ENCODE measurements at regions of chr2 and their contacts with region 1.

Region 1: GRCh38 chr2:127067620-127068350 is 39.2 kb downstream of the BIN1 start:
- DNase-seq: peak; percentile 87
- H3K4me3 ChIP-seq: no peak overlapping the region; a peak in 1 of 4 replicates
- H3K27ac ChIP-seq: no peak overlapping the region
- H3K4me1 ChIP-seq: peaks cover 15 to 29% of the 10 kb centered on the region in 2 experiments; a peak in 3 of 4 replicates
- H3K27me3 ChIP-seq: no peaks in the 10 kb centered on the region
- CTCF ChIP-seq: peak; percentile 82
- EP300 ChIP-seq: no peak
- RAD21 ChIP-seq: peak; percentile 82

Region 2: GRCh38 chr2:126866451-126866850 is 201.3 kb before region 1 on chr2:
- CTCF ChIA-PET with region 1: no interaction called
- POLR2A ChIA-PET with region 1: no interaction called
- DNase-seq: no peak
- H3K4me3 ChIP-seq: no peak overlapping the region
- H3K27ac ChIP-seq: no peak overlapping the region
- H3K4me1 ChIP-seq: no peaks in the 10 kb centered on the region
- H3K27me3 ChIP-seq: no peaks in the 10 kb centered on the region
- CTCF ChIP-seq: no peak
- EP300 ChIP-seq: no peak
- RAD21 ChIP-seq: no peak

Region 3: GRCh38 chr2:127049927-127050802 is 17.6 kb before region 1 on chr2:
- CTCF ChIA-PET with region 1: interaction called, 18 read pairs
- POLR2A ChIA-PET with region 1: no interaction called
- DNase-seq: peak; percentile 96
- H3K4me3 ChIP-seq: no peak overlapping the region
- H3K27ac ChIP-seq: no peak overlapping the region
- H3K4me1 ChIP-seq: peaks cover 0 to 4% of the 10 kb centered on the region in 2 experiments; a peak in 1 of 4 replicates
- H3K27me3 ChIP-seq: no peaks in the 10 kb centered on the region
- CTCF ChIP-seq: peak; percentile 86
- EP300 ChIP-seq: no peak
- RAD21 ChIP-seq: peak; percentile 83

Region 4: DNA sequence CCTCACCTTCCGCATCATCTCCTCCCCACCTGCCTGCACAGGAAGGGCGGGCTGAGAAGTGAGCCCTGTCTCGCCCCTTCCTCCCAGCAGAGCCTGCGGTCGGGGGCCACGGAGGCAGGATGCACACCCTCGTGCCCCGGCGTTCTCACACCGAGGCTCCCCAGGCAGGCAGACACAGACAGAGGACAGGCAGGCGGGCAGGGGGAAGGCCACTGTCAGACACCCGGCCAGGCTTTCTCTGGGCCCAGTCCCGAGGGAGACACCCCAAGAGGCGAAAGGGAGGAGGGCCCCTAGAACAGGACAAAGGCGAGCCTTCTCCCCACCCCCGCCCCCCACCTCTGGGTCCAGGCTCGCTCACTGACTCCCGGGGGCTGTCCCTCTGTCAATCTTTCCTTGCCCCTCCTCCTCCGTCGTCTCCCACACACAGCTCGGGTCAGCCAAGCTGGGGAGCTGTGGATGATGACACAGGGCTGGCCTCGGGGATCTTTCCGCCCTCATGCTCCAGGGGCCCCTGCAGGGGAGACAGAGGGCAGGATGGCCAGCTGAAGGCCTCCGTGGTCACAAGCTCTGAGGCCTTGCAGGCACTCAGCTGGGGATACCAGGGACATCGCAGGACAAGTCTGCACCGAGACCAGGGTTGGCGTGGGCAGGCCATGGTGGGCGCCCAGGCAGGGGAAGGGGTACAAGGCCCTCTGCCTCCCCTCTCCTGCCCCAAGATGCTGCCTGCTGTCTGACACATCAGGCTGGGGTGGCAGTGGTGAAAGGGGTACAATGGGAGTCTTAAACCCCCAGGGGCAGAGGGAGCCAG is 14.2 kb after region 1 on chr2:
- CTCF ChIA-PET with region 1: interaction called, 32 read pairs
- POLR2A ChIA-PET with region 1: no interaction called
- DNase-seq: no peak
- H3K4me3 ChIP-seq: no peak overlapping the region
- H3K27ac ChIP-seq: no peak overlapping the region; a peak in 1 of 4 replicates
- H3K4me1 ChIP-seq: peaks cover 8 to 46% of the 10 kb centered on the region in 2 experiments; a peak in 2 of 4 replicates
- H3K27me3 ChIP-seq: no peaks in the 10 kb centered on the region
- CTCF ChIP-seq: no peak
- EP300 ChIP-seq: no peak
- RAD21 ChIP-seq: no peak

Region 5: DNA sequence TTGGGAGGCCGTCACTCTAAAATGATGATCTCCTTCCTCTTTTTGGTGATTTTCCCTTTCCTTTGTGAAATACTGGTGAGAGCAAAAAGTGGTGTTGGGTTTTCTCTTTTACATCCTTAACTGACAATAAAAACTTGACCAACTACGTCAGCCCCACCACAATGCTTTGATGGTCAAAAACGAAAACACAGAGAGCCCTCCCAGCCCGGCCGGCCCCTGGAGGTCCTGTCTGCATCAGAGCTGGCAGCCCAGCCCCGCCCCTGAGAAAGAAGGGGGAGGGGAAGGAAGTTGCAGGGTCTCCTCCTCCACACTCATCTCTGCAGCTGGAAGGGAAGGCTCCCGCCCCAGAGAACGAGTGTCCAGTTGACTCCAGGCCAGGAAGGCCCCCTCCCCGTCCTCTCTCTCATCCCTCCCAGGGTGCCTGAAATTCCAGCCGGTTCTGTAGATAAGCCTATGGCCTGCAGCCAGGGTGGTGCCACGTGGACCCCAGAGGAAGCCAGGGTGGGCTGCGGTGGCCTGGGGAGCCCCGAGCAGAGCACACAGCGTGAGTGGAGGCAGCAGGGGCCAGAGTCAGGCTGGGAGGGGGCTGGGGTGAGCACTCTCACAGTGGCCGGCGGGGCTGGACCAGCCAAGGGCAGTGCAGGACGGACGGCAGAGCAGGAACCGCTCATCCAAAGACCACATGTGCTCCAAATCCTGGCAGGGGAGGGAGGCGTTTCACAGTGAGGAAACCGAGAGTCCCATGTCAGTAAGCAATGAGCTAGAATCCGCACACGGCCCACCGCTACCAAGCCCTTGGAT is 19.4 kb after region 1 on chr2:
- CTCF ChIA-PET with region 1: interaction called, 13 read pairs
- POLR2A ChIA-PET with region 1: no interaction called
- DNase-seq: peak; percentile 89
- H3K4me3 ChIP-seq: no peak overlapping the region
- H3K27ac ChIP-seq: peak overlapping the region; percentile 26 to 76
- H3K4me1 ChIP-seq: peaks cover 12 to 51% of the 10 kb centered on the region in 2 experiments; a peak in 2 of 4 replicates
- H3K27me3 ChIP-seq: no peaks in the 10 kb centered on the region
- CTCF ChIP-seq: no peak
- EP300 ChIP-seq: peak in 1 of 2 experiments; percentile 40; a peak in 1 of 4 replicates
- RAD21 ChIP-seq: no peak

Region 6: GRCh38 chr2:127106951-127107621 is 39.3 kb after region 1 on chr2 and contains the start of gene BIN1:
- CTCF ChIA-PET with region 1: interaction called, 13 read pairs
- POLR2A ChIA-PET with region 1: interaction called, 5 read pairs
- DNase-seq: peak; percentile 92
- H3K4me3 ChIP-seq: peak within 1 kb of the TSS; percentile 76 to 87
- H3K27ac ChIP-seq: peak within 1 kb of the TSS; percentile 60 to 90
- H3K4me1 ChIP-seq: peaks cover 17 to 45% of the 10 kb centered on the region in 2 experiments
- H3K27me3 ChIP-seq: no peaks in the 10 kb centered on the region
- CTCF ChIP-seq: no peak
- EP300 ChIP-seq: no peak
- RAD21 ChIP-seq: no peak
- polyA plus RNA-seq, gene BIN1: 31.5 and 40.3 TPM in 2 replicates

Region 7: DNA sequence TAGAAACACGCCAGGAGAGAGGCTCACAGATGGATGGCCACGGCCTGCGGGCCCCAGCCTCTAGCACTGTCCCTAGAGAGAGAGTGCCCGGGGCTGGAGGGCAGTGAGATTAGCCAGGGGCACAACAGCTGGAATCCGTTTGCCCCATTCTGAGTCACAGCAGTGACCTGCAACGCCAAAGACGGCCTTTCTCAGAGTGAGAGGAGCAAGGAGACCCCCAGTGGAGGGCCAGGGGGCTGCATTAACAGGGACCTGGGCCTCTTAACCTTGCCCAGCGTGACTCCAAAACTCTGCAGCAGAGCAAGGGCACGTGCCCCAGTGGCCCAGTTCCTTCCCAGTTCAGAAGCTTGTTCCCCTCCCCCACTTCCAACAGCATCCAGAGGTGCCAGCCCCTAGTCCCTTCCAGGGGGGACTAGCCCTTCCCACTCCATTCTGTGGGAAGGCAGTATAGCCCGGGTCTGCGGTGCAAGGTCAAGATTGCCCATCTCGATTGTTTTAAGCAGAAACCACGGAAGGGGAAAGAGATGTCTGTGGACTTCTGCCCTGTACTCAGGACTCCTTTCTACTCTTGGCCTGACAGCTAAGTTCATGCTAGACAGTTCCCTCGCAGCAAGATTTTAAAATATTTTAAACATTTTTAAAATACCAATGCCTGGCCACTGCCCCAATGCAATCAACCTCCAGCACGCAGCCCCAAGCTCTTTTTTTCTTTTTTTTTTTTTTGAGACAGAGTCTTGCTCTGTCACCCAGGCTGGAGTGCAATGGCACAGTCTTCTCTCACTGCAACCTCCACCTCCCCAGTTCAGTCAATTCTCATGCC is 90.1 kb after region 1 on chr2:
- CTCF ChIA-PET with region 1: interaction called, 52 read pairs
- POLR2A ChIA-PET with region 1: no interaction called
- DNase-seq: peak; percentile 83
- H3K4me3 ChIP-seq: no peak overlapping the region
- H3K27ac ChIP-seq: no peak overlapping the region
- H3K4me1 ChIP-seq: peaks cover 2 to 10% of the 10 kb centered on the region in 2 experiments; a peak in 2 of 4 replicates
- H3K27me3 ChIP-seq: no peaks in the 10 kb centered on the region
- CTCF ChIP-seq: peak; percentile 31
- EP300 ChIP-seq: no peak
- RAD21 ChIP-seq: peak; percentile 73

Region 8: GRCh38 chr2:127174136-127174535 is 106.4 kb after region 1 on chr2:
- CTCF ChIA-PET with region 1: interaction called, 80 read pairs
- POLR2A ChIA-PET with region 1: no interaction called
- DNase-seq: peak; percentile 80
- H3K4me3 ChIP-seq: no peak overlapping the region
- H3K27ac ChIP-seq: no peak overlapping the region
- H3K4me1 ChIP-seq: peaks cover 0 to 32% of the 10 kb centered on the region in 2 experiments; a peak in 1 of 4 replicates
- H3K27me3 ChIP-seq: no peaks in the 10 kb centered on the region
- CTCF ChIP-seq: peak; percentile 36
- EP300 ChIP-seq: no peak
- RAD21 ChIP-seq: peak; percentile 66

Region 9: DNA sequence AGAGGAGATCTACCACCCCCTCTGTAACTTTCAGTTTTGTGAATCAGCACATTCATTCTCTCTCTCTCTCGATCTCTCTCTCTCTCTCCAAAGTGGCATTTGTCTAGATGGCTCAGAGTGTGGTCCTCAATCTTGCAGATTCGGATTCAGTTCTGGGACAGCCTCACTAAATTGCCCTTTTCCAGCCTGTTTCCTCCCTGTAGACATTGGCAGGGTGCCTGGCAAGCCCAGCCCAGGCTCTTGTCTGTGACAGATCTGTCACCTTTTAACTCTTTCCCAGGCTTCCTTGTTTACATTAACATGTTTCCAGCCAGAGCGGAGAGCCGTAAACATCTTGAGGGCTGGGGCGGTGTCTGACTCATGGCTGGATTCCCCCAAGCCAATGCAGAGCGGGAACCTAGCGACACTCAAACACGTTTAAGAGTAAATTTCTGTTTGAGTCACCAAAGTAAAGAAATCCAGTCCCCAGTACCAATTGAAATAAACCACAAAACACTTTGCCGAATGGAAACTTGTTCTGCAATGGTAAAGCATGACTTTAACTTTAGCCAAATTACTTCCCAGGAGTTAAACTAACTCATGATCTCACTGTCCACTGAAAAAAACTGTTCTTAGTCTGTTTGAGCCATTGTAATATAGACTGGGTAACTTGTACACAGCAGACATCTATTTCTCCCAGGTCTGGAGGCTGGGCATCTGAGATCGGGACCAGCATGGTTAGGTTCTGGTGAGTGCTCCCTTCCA is 158.9 kb after region 1 on chr2:
- CTCF ChIA-PET with region 1: no interaction called
- POLR2A ChIA-PET with region 1: no interaction called
- DNase-seq: no peak
- H3K4me3 ChIP-seq: no peak overlapping the region
- H3K27ac ChIP-seq: no peak overlapping the region
- H3K4me1 ChIP-seq: peaks cover 0 to 4% of the 10 kb centered on the region in 2 experiments; a peak in 1 of 4 replicates
- H3K27me3 ChIP-seq: no peaks in the 10 kb centered on the region; the same call in 1 of the 2 replicates
- CTCF ChIP-seq: no peak
- EP300 ChIP-seq: no peak
- RAD21 ChIP-seq: no peak

Measured in SK-N-SH (cell line).